ENCODE measurements at regions of chr1 and their contacts with region 1.

Region 1: GRCh38 chr1:205300886-205301821 is 20.4 kb downstream of the NUAK2 start:
- DNase-seq: peak; percentile 92
- H3K4me3 ChIP-seq: peak overlapping the region; percentile 48
- H3K27ac ChIP-seq: peak overlapping the region; percentile 89
- H3K4me1 ChIP-seq: peaks cover 52% of the 10 kb centered on the region
- CTCF ChIP-seq: no peak

Region 2: DNA sequence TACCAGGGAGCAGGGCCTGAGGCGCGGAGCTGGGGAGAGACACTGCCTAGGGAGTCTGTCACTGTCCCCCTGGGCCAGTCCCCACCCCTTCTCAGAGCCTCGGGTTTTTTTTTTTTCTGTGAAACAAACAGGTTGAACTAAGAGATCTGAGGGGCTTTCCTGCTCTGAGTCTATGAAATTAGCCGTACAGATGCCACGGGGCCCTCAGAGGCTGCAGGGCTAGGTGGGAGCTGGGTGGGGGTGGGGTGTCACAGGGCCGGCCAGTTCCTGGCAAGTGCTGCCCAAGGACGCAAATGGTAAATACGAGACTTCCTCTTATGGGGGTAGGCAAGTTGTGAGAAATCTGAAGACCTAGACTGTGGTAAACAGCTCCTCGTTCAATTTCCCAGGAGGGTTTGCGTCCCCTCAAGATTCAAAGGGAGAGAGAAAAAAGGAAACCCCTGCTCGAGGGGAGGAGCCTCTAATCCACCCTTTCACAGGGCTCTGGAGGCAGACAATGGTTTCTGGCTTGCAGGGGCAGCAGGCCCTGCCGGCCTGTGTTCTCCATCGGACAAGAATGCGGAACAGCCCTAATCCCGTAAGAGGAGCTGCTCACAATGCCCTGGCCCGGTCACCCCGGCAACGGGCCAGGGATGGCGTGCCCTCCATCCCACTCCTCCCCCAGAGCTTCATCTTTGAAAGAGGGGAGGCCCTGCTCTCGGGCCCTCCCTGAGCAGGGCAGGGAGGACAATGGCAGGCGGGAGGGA is 12.6 kb after region 1 on chr1:
- CTCF ChIA-PET with region 1: interaction called, 3 read pairs
- POLR2A ChIA-PET with region 1: interaction called, 8 read pairs
- intact Hi-C with region 1: loop called (anchors 1 kb)
- DNase-seq: peak; percentile 76
- H3K4me3 ChIP-seq: peak overlapping the region; percentile 60
- H3K27ac ChIP-seq: peak overlapping the region; percentile 66
- H3K4me1 ChIP-seq: peaks cover 83% of the 10 kb centered on the region
- CTCF ChIP-seq: no peak

Region 3: GRCh38 chr1:205321164-205321958 is 20.2 kb after region 1 on chr1 and contains the start of gene NUAK2:
- CTCF ChIA-PET with region 1: interaction called, 5 read pairs
- POLR2A ChIA-PET with region 1: interaction called, 3 read pairs
- intact Hi-C with region 1: loop called (anchors 2 kb)
- DNase-seq: peak; percentile 87
- H3K4me3 ChIP-seq: peak within 1 kb of the TSS; percentile 75
- H3K27ac ChIP-seq: peak within 1 kb of the TSS; percentile 16
- H3K4me1 ChIP-seq: peaks cover 61% of the 10 kb centered on the region
- CTCF ChIP-seq: peak; percentile 61
- total RNA-seq, gene NUAK2: 6.5 and 9.1 TPM in 2 replicates